OCI-LY7 (cell line): ENCODE measurements at regions of chr10 and their contacts with region 1.

Region 1: DNA sequence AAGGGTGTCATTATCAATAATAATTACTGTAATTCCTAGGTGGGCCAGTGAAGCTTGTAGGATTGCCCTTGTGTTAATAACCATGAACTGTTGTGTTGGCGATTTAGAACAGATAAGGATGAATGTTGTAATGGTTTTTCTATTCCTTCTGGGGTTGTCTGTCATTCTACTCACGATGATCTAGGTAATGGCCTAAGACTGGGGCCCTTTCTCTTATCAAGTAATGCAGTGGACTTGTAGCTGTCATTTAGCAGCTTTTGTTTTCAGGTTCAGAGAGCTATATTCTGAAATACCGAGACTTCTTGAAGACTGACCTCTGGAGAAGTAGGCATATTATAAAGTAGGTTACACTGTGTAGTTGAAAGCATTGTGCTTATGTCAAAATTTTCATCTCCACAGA is 110.2 kb downstream of the TAF3 start:
- DNase-seq: no peak
- H3K4me3 ChIP-seq: no peak overlapping the region
- H3K27ac ChIP-seq: no peak overlapping the region
- H3K4me1 ChIP-seq: no peaks in the 10 kb centered on the region
- CTCF ChIP-seq: no peak

Region 2: DNA sequence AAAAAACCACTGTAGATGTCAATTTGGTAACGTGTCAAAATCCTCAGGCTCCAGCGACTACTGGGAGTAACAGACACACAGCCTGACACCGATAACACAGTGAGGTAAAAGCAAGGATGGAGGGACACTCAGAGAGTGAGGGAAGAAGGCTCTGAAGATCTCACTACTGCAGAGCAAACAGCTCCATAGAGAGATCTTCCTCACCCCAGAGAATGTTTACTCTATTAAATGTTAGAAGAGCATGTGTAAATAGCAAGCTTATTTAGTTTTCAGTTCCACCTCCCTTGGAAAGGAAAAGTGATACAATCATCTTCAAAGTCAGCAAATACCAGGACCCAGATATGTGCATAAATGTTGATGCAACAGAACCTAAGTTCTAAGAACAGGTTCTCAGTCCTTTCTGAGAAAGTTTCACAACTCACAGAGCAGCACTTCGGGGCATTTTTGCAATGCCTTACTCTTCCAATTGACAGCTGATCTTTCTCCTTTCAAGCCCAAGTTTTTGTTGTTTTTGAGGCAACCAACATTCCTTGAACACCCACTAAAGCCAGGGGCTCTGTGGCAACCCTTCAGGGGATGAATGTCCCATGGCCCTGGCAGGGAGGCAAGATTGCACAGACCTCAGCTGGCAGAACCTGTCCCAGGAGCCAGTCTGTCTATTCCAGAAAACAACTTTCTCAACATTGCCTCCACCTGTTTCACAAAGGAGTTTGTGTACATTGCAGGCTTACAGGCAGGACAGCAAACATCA is 695.1 kb before region 1 on chr10:
- CTCF ChIA-PET with region 1: no interaction called
- POLR2A ChIA-PET with region 1: no interaction called
- intact Hi-C with region 1: no loop called
- DNase-seq: no peak
- H3K4me3 ChIP-seq: no peak overlapping the region
- H3K27ac ChIP-seq: no peak overlapping the region
- H3K4me1 ChIP-seq: no peaks in the 10 kb centered on the region
- CTCF ChIP-seq: no peak

Region 3: GRCh38 chr10:7797582-7797981 is 131.0 kb before region 1 on chr10:
- CTCF ChIA-PET with region 1: no interaction called
- POLR2A ChIA-PET with region 1: no interaction called
- intact Hi-C with region 1: no loop called
- DNase-seq: no peak
- H3K4me3 ChIP-seq: no peak overlapping the region
- H3K27ac ChIP-seq: no peak overlapping the region
- H3K4me1 ChIP-seq: peaks cover 4% of the 10 kb centered on the region
- CTCF ChIP-seq: no peak

Region 4: DNA sequence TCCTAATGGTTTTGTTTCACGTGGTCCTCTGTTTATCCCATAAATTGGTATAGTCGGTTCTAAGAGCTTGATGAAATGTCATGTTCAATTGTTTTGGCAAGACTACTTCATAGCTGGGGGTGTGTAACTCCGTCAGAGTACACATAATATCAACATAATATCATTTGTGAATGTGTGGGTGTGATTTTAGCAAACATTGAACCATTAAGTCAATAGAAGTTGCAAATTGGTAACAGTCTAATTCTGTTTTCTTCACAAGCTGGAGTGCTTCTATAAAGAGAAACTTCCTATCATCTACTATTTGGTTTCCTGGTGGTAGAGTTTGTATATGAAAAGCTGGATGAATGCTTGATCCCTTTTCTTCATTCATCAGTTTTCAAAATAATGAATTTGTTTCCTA is 76.0 kb before region 1 on chr10:
- CTCF ChIA-PET with region 1: no interaction called
- POLR2A ChIA-PET with region 1: no interaction called
- intact Hi-C with region 1: no loop called
- DNase-seq: no peak
- H3K4me3 ChIP-seq: no peak overlapping the region
- H3K27ac ChIP-seq: no peak overlapping the region
- H3K4me1 ChIP-seq: no peaks in the 10 kb centered on the region
- CTCF ChIP-seq: no peak

Region 5: GRCh38 chr10:9024210-9024609 is 1095.7 kb after region 1 on chr10:
- CTCF ChIA-PET with region 1: no interaction called
- POLR2A ChIA-PET with region 1: no interaction called
- intact Hi-C with region 1: loop called (anchors 10 kb)
- DNase-seq: no peak
- H3K4me3 ChIP-seq: no peak overlapping the region
- H3K27ac ChIP-seq: no peak overlapping the region
- H3K4me1 ChIP-seq: no peaks in the 10 kb centered on the region
- CTCF ChIP-seq: no peak